ENCODE measurements at regions of chr14 and their contacts with region 1.

Region 1: GRCh38 chr14:75979071-75979571 is 2.7 kb downstream of the TGFB3 start:
- DNase-seq: peak; percentile 48 to 56
- H3K4me3 ChIP-seq: peak overlapping the region; percentile 49 to 58
- H3K27ac ChIP-seq: peak overlapping the region; percentile 97 to 99
- H3K4me1 ChIP-seq: peaks cover 0 to 9% of the 10 kb centered on the region in 2 donors
- H3K27me3 ChIP-seq: no peaks in the 10 kb centered on the region
- CTCF ChIP-seq: peak; percentile 52 to 71 (median 61)
- POLR2A ChIP-seq: peak in 1 of 2 donors; percentile 12

Region 2: DNA sequence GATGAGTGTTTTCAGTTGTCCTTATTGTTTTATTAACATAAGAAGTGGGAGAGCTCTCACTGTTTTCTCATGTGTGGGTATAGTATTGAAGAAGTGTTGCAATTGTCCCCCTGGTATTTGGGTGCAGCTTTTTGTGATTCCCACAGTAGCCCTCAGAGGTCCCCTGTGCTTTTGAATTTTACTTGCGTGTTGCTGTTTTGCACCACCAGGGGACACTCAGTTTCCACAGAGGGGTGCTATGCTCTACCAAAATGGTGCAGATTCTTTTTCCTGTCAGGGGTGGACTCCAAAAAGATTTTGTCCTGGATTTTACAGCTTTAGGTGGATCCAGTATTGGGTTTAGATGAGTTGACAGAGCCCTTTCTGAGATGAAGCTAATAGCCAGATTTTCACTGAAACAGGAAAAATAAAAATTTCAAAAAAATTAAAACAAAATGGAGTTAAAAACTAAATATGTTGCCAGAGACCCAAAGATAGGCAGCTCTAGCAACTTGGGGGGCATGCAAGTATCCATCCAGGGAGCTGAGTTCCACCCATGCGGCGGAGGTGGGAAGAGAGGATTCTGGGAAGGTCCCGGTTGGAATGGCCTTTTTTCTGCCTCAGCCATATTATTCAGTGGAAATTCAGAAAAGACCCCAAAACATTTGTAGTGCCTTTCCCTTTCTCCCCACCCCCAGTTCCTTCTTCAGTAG is 267.9 kb before region 1 on chr14:
- intact Hi-C with region 1: loop called (anchors 10 kb)
- DNase-seq: peak; percentile 27 to 39
- H3K4me3 ChIP-seq: no peak overlapping the region
- H3K27ac ChIP-seq: peak overlapping the region; percentile 72 to 76
- H3K4me1 ChIP-seq: no peaks in the 10 kb centered on the region
- H3K27me3 ChIP-seq: no peaks in the 10 kb centered on the region
- CTCF ChIP-seq: peak; percentile 63 to 69 (median 65)
- POLR2A ChIP-seq: no peak

Region 3: GRCh38 chr14:75794615-75795038 is 184.5 kb before region 1 on chr14:
- intact Hi-C with region 1: loop called (anchors 10 kb)
- DNase-seq: no peak
- H3K4me3 ChIP-seq: no peak overlapping the region
- H3K27ac ChIP-seq: peak overlapping the region; percentile 23 to 59
- H3K4me1 ChIP-seq: no peaks in the 10 kb centered on the region
- H3K27me3 ChIP-seq: no peaks in the 10 kb centered on the region
- CTCF ChIP-seq: peak; percentile 49 to 63 (median 56)
- POLR2A ChIP-seq: no peak

Region 4: GRCh38 chr14:75906676-75907280 is 72.3 kb before region 1 on chr14:
- intact Hi-C with region 1: loop called (anchors 10 kb)
- DNase-seq: peak; percentile 63 to 82
- H3K4me3 ChIP-seq: no peak overlapping the region
- H3K27ac ChIP-seq: peak overlapping the region; percentile 47 to 61
- H3K4me1 ChIP-seq: no peaks in the 10 kb centered on the region
- H3K27me3 ChIP-seq: no peaks in the 10 kb centered on the region
- CTCF ChIP-seq: peak; percentile 75 to 89 (median 84)
- POLR2A ChIP-seq: no peak

Region 5: GRCh38 chr14:76293923-76294322 is 314.8 kb after region 1 on chr14:
- intact Hi-C with region 1: no loop called
- DNase-seq: no peak
- H3K4me3 ChIP-seq: no peak overlapping the region
- H3K27ac ChIP-seq: no peak overlapping the region
- H3K4me1 ChIP-seq: no peaks in the 10 kb centered on the region
- H3K27me3 ChIP-seq: no peaks in the 10 kb centered on the region
- CTCF ChIP-seq: no peak
- POLR2A ChIP-seq: no peak

Measured in uterus (tissue), 4 donors.